Mammary epithelial cell (primary cell): ENCODE measurements at regions of chr1 and their contacts with region 1.

Region 1: DNA sequence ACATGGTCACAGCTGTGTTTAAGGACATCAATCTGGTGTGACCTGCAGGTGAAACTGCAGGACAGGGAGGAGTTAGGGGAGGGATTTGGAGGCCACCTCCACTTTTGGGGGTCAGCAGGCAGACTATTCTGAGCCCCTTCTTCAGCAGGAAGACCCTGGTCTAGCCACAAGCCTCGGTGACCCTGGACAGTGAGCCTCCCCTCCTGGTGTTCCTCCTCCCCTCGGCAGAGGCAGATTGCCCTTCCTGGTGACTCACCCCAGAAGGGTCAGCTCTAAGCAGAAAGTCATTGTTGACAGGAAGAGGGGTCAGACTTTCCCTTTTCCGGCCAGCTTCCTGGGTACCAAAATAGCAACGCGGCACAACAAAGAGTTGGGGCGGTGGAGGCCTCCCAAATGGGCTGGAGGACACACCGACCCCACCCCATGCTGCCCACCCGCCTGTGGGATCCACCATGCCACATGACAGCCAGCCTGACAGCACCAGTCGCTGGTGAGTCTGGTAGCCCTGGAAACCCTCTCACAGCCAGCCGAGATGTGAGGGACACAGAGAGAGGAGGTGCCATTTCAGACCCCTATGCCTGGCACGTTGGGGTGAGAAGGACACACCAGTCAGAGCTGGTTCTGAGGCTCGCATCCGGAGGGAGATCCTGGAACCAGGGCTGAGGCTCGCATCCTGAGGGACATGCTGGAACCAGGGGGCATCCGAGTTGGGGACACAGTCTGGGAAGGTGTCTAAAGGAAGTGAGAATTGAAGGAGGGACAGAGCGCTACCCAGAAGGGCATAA is 14.7 kb upstream of the CSF1 start:
- DNase-seq: no peak
- H3K4me3 ChIP-seq: no peak overlapping the region
- H3K27ac ChIP-seq: no peak overlapping the region
- H3K4me1 ChIP-seq: peaks cover 21% of the 10 kb centered on the region
- H3K27me3 ChIP-seq: no peaks in the 10 kb centered on the region
- CTCF ChIP-seq: no peak

Region 2: DNA sequence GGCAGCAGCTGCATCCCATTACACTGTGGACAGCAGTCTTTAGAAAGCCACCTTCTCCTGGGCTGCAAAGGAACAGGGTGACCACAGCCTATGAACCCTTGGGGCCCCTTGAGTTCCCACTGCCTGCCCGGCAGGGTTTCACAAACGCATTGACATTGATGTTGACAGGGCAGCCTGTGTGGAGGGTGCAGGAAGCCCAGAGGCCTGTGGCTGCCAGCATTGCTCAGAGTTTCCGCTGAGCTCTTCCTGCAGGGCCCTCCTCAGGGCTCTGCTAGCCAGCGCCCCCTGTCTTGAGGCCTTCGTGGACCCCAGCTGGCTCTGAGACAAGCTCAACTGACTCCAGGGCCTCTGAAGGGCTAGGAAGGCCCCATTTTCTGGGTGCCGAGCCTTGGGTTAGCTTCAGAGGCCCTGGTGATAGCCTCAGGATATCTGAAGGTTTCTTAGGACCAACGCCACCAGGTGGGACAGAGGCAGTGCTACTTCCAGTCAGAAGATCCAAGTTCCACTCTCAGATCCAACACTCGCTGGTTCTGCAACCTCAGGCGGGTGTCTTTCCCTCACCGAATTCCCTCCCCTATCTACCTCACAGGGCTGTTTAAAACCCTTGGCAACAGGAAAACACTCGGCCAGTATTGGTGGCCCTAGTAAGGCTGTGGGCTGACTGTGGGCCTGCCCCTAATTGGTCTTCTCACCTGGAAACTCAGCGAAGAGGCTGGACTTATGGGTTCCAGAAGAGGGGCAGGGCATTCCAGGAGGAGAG is 105.0 kb before region 1 on chr1:
- CTCF ChIA-PET with region 1: no interaction called
- dilution Hi-C with region 1: loop called (anchors 5 kb)
- in situ Hi-C with region 1: loop called in 1 of 2 experiments (anchors 25 kb)
- intact Hi-C with region 1: no loop called
- DNase-seq: no peak
- H3K4me3 ChIP-seq: no peak overlapping the region
- H3K27ac ChIP-seq: no peak overlapping the region
- H3K4me1 ChIP-seq: peaks cover 34% of the 10 kb centered on the region
- H3K27me3 ChIP-seq: no peaks in the 10 kb centered on the region
- CTCF ChIP-seq: no peak